ENCODE measurements at regions of chr1 and their contacts with region 1.

Region 1: DNA sequence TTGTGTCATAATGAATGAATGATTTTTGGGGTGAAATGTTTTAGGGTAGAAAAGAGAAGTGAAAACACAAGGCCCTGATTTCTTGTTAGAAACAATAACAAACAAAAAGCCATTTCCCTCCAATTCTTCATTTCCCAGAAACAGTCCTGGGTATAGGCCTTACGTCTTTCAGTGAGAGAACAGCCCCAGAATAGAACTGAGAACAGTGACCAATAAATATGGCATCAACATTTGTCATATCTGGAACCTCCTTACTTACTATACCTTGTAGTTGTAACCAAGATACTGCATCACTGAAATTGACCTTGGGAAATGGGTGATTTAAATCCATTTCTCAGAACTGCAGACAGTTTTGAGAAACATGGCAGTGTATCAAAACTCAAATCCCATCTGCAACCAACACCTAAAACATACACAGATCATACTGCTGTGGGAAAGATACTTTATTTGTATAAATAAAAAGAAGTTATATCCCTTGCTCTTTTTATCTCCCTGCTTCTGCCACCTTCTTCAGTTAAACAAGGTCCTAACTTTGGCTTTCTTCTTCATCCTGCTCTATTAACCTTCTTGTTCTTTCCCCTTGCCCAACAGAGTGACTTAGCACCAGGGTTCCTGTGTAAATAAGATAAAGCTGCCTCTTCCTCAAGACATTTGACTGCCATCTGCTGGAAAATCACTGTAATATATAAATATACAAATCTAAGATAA is 19.5 kb downstream of the XKR8 start:
- DNase-seq: peak; percentile 34
- H3K27ac ChIP-seq: no peak overlapping the region
- CTCF ChIP-seq: peak; percentile 62

Region 2: DNA sequence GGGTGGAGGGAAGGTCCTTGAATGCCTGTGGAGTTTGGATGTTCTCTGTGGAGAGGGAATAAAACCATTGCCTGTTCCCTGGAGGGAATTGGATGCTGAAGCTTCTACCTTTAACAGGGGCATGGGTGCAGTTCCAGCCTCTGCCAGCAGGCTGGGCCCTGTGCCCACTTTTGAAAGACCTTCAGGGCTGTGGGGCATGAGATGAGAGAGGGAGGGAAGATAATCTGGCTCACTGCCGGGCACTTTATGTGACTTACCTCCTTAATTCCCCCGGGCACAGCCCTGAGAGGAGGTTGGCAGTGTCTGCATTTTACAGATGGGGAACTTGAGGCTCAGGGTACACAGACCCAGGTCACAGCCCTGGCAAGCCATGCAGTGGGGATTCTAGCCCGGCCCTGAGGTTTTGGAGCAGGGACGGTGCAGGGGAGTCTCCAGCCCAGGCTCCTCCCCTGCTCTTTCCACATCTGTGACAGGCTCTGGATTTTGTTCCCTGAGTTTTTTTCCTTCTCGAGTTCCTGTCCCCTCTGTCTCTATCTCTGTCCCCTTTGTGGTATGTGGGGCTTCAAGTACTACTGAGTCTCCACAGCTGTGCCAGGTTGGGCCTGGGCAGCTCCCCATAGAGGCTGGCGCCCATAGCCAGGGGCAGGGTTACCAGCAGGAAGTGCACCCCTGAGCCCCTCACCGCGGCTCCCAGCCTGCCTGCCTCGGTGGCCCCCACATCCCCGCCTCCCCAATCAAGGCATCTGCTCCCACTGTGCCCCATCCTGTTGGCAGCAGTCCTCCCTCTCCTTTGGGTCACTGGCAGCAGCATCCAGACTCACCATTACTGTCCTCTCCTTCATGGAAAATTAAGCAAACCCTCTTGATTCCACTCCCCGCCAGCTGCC is 121.0 kb before region 1 on chr1:
- CTCF ChIA-PET with region 1: interaction called, 26 read pairs
- POLR2A ChIA-PET with region 1: interaction called, 4 read pairs
- DNase-seq: peak; percentile 81
- H3K27ac ChIP-seq: peak overlapping the region; percentile 33
- CTCF ChIP-seq: peak; percentile 94

Region 3: GRCh38 chr1:29542548-29542947 is 1563.2 kb after region 1 on chr1:
- CTCF ChIA-PET with region 1: no interaction called
- POLR2A ChIA-PET with region 1: no interaction called
- DNase-seq: no peak
- H3K27ac ChIP-seq: no peak overlapping the region
- CTCF ChIP-seq: no peak

Measured in RWPE1 (cell line).